GM10248 (cell line): ENCODE measurements at regions of chr14 and their contacts with region 1.

Region 1: DNA sequence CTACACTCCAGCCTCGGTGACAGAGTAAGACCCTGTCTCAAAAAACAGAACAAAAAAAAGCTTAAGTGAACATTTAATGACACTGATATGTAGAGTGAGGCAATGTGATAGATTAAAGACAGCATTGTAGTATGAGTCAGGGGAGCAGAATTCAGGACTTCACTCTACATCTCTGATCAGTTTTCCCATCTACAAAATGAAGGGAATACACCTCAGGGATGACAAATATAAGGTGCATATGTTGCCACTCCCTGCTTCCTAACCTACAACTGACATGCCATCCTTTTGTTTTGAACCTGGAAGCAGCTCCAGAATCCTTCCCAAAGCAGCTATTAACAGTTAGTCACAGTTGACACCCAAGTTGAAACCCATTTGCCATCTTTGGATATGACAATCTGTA is 30.9 kb upstream of the STRN3 start:
- DNase-seq: no peak
- CTCF ChIP-seq: no peak

Region 2: GRCh38 chr14:30994681-30995620 is 62.1 kb before region 1 on chr14:
- CTCF ChIA-PET with region 1: no interaction called
- POLR2A ChIA-PET with region 1: no interaction called
- DNase-seq: no peak
- CTCF ChIP-seq: no peak

Region 3: GRCh38 chr14:31070431-31070830 is 13.4 kb after region 1 on chr14:
- CTCF ChIA-PET with region 1: interaction called, 11 read pairs
- POLR2A ChIA-PET with region 1: no interaction called
- DNase-seq: no peak
- CTCF ChIP-seq: no peak